Tibial artery (tissue), 4 donors: ENCODE measurements at regions of chr1 and their contacts with region 1.

Region 1: GRCh38 chr1:112803906-112804762 is 89.0 kb upstream of the PPM1J start:
- DNase-seq: peak; percentile 25 to 69
- H3K4me3 ChIP-seq: no peak overlapping the region
- H3K27ac ChIP-seq: no peak overlapping the region
- H3K4me1 ChIP-seq: no peaks in the 10 kb centered on the region
- H3K27me3 ChIP-seq: no peaks in the 10 kb centered on the region
- CTCF ChIP-seq: peak; percentile 41 to 48

Region 2: DNA sequence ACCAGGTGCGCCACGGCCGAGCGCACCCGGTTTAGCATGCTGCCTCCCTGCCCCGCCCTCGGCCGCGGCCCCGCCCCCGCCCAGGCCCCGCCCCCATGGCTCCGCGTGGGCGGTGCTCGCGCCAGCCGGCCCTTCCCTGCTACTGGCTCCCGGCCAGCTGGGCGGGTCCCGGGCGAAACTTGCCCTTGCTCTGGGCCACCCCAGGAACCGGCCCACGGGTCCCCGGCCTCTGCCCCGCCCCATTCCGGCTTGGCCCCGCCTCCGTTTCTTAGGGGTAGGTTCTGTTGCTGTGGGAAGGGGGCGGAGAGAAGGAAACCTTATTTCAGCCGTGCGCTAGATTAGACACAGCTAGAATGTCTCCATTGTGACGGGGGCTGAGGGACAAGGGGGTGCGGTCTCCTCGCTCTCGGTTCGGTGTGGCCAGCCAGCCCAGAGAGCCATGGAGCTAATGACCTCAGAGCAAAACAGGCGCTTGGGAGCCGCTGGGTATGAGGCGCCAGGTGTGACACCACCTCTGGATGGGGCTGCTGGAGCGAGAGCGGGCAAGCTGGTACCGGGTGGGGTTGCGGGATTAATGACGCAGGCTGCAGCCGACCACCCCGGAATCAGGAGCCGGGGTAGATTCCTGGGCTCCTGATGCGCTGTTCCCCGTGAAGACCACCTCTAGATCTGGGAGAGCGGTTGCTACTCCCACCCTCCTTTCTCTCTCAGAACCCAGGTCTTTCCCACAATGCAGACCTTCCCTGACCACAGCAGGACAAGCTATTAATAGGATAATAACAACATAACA is 88.7 kb before region 1 on chr1 and contains the start of gene PPM1J:
- intact Hi-C with region 1: loop called (anchors 5 kb)
- DNase-seq: peak; percentile 98 to 99
- H3K4me3 ChIP-seq: peak within 1 kb of the TSS; percentile 60 to 67
- H3K27ac ChIP-seq: peak within 1 kb of the TSS; percentile 64 to 70
- H3K4me1 ChIP-seq: peaks cover 0 to 38% (median 27%) of the 10 kb centered on the region in 4 donors
- H3K27me3 ChIP-seq: peaks cover 0 to 15% of the 10 kb centered on the region in 2 donors
- CTCF ChIP-seq: no peak

Region 3: GRCh38 chr1:112836642-112837041 is 32.5 kb after region 1 on chr1:
- intact Hi-C with region 1: no loop called
- DNase-seq: no peak
- H3K4me3 ChIP-seq: no peak overlapping the region
- H3K27ac ChIP-seq: no peak overlapping the region
- H3K4me1 ChIP-seq: no peaks in the 10 kb centered on the region
- H3K27me3 ChIP-seq: no peaks in the 10 kb centered on the region
- CTCF ChIP-seq: no peak